Caco-2 (cell line): ENCODE measurements at regions of chr22 and their contacts with region 1.

Region 1: GRCh38 chr22:18024276-18024947 is at the start of gene MICAL3:
- DNase-seq: peak; percentile 44 to 83
- H3K4me3 ChIP-seq: peak within 1 kb of the TSS; percentile 55
- H3K4me3 Mint-ChIP-seq: peak within 1 kb of the TSS; percentile 76
- H3K27ac Mint-ChIP-seq: peak within 1 kb of the TSS; percentile 21
- H3K4me1 ChIP-seq: peaks cover 3% of the 10 kb centered on the region; the same call in 1 of the 2 replicates
- H3K4me1 Mint-ChIP-seq: peaks cover 6% of the 10 kb centered on the region
- H3K27me3 ChIP-seq: no peaks in the 10 kb centered on the region
- H3K27me3 Mint-ChIP-seq: peaks cover 2% of the 10 kb centered on the region
- CTCF ChIP-seq: peak; percentile 39 to 67
- total RNA-seq, gene MICAL3: 65.6 and 74.0 TPM in 2 replicates

Region 2: DNA sequence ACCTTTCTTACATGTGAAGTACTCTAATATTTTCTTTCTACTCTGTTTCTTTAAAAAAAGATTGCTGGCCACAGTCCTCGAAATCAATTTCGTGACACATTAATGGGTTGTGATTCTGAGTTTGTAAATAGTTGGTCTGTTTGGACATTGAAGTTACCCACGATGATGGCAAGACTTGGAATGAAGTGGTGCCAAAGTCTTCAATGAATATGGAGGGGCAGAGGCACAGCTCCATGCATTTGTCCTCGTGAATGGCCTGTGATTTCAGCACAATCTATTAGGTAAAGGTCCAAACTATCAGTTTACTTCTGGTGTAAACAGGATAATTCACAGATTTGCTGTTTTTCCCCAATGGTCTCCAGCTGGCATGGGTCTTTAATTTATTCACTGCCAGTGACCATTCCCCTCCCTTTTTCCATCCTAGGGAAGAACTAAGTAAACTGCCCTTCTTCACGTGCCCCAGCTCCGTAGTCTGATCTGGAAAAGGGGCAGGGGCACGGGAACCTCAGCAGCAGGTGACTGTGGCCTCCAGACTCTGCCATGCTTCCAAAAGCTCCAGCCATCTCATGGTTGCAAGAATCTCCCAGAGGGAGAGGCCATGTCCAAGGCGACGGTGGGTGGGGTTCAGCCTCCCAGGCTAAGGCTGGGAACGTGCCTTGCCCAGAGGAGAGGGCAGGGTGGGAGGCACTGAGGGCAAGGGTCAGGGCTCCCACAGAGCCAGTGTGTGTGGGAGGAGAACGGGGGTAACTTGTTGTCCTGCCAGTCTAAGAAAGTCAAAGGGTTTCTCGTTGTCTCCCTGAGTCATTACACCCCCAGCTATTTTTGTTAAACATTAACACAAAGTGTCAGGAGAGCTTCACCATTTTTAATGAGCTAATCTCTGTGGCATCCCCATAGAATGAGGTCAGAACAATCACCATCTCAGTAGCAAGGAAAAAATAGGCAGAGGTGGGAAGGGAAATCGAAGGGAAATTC is 36.5 kb after region 1 on chr22:
- CTCF ChIA-PET with region 1: no interaction called
- POLR2A ChIA-PET with region 1: interaction called, 3 read pairs
- intact Hi-C with region 1: loop called (anchors 5 kb)
- DNase-seq: peak; percentile 75 to 77
- H3K4me3 ChIP-seq: no peak overlapping the region; the same call in 1 of the 2 replicates
- H3K4me3 Mint-ChIP-seq: peak overlapping the region; percentile 57
- H3K27ac Mint-ChIP-seq: peak overlapping the region; percentile 96
- H3K4me1 ChIP-seq: peaks cover 72% of the 10 kb centered on the region
- H3K4me1 Mint-ChIP-seq: peaks cover 32% of the 10 kb centered on the region
- H3K27me3 ChIP-seq: no peaks in the 10 kb centered on the region
- H3K27me3 Mint-ChIP-seq: no peaks in the 10 kb centered on the region
- CTCF ChIP-seq: no peak